ENCODE measurements at regions of chr5 and their contacts with region 1.

Region 1: GRCh38 chr5:130109152-130109551 is 204.9 kb downstream of the CHSY3 start:
- DNase-seq: peak; percentile 33
- H3K4me3 ChIP-seq: no peak overlapping the region
- H3K27ac ChIP-seq: no peak overlapping the region
- H3K4me1 ChIP-seq: no peaks in the 10 kb centered on the region
- H3K27me3 ChIP-seq: no peaks in the 10 kb centered on the region
- CTCF ChIP-seq: peak; percentile 27 to 47
- POLR2A ChIP-seq: no peak

Region 2: GRCh38 chr5:130141659-130142320 is 32.6 kb after region 1 on chr5:
- CTCF ChIA-PET with region 1: interaction called, 13 read pairs
- POLR2A ChIA-PET with region 1: no interaction called
- dilution Hi-C with region 1: no loop called
- intact Hi-C with region 1: loop called (anchors 1 kb)
- DNase-seq: peak; percentile 57
- H3K4me3 ChIP-seq: no peak overlapping the region
- H3K27ac ChIP-seq: no peak overlapping the region
- H3K4me1 ChIP-seq: no peaks in the 10 kb centered on the region
- H3K27me3 ChIP-seq: no peaks in the 10 kb centered on the region
- CTCF ChIP-seq: peak; percentile 57 to 75
- POLR2A ChIP-seq: no peak

Region 3: DNA sequence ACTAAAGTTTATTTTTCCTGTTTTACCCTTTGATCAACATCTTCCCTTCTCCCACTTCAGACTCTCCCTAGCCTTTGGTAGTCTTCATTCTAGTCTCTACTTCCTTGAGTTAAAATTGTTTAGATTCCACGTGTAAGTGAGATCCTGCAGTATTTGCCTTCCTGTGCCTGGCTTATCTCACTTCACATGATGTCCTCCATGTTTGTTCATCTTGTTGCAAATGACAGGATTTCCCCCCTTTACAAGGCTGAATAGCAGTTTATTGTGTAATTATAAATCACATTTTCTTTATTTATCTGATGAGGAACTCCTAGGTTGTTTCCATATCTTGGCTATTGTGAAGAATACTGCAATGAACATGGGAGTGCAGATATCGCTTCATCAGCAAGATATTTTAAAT is 256.8 kb after region 1 on chr5:
- CTCF ChIA-PET with region 1: no interaction called
- POLR2A ChIA-PET with region 1: no interaction called
- dilution Hi-C with region 1: no loop called
- intact Hi-C with region 1: loop called (anchors 10 kb)
- DNase-seq: peak; percentile 84
- H3K4me3 ChIP-seq: no peak overlapping the region
- H3K27ac ChIP-seq: no peak overlapping the region
- H3K4me1 ChIP-seq: no peaks in the 10 kb centered on the region
- H3K27me3 ChIP-seq: no peaks in the 10 kb centered on the region
- CTCF ChIP-seq: no peak
- POLR2A ChIP-seq: no peak

Region 4: DNA sequence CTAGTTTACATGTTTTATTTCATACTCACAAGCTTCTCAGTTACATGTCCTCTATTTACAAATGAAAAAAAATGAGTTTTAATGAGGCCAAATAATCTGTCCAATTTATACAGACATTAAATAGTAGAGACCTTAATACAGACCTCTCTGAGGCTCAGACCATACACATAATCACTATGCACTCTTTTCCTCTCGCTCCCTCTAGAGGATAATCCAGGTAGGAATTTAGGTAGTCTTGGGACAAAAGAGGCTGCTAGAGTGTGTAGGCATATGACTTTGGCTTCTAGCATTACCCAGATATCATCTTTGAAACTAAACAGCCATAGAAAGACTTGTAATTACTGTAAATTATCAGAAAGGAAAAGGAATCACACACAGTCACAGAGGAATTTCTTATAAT is 611.2 kb after region 1 on chr5:
- CTCF ChIA-PET with region 1: interaction called, 5 read pairs
- POLR2A ChIA-PET with region 1: no interaction called
- dilution Hi-C with region 1: no loop called
- intact Hi-C with region 1: loop called (anchors 1 kb)
- DNase-seq: peak; percentile 67
- H3K4me3 ChIP-seq: no peak overlapping the region
- H3K27ac ChIP-seq: no peak overlapping the region
- H3K4me1 ChIP-seq: no peaks in the 10 kb centered on the region
- H3K27me3 ChIP-seq: peaks cover 0 to 1% of the 10 kb centered on the region in 2 experiments
- CTCF ChIP-seq: peak; percentile 9 to 54
- POLR2A ChIP-seq: no peak

Region 5: DNA sequence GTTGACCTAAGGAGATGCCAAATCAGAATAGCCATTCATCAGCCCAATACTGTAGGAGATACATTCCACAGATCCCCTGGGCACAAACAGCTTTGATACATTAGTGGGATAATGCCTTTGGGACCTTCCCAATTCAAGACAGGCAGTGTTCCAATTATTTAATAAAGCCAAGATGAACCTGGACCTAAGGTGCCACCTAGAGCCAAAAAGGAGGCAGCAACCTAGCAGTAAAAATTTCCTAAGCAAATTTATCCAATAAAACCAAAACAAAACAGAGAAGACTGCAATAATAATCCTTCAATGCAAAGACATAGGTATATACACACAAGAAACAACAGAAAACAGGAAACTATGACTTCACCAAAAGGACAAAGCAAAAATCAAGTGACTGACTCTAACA is 802.9 kb after region 1 on chr5:
- CTCF ChIA-PET with region 1: no interaction called
- POLR2A ChIA-PET with region 1: no interaction called
- dilution Hi-C with region 1: no loop called
- intact Hi-C with region 1: loop called (anchors 5 kb)
- DNase-seq: no peak
- H3K4me3 ChIP-seq: no peak overlapping the region
- H3K27ac ChIP-seq: no peak overlapping the region
- H3K4me1 ChIP-seq: no peaks in the 10 kb centered on the region
- H3K27me3 ChIP-seq: no peaks in the 10 kb centered on the region
- CTCF ChIP-seq: no peak
- POLR2A ChIP-seq: no peak

Region 6: DNA sequence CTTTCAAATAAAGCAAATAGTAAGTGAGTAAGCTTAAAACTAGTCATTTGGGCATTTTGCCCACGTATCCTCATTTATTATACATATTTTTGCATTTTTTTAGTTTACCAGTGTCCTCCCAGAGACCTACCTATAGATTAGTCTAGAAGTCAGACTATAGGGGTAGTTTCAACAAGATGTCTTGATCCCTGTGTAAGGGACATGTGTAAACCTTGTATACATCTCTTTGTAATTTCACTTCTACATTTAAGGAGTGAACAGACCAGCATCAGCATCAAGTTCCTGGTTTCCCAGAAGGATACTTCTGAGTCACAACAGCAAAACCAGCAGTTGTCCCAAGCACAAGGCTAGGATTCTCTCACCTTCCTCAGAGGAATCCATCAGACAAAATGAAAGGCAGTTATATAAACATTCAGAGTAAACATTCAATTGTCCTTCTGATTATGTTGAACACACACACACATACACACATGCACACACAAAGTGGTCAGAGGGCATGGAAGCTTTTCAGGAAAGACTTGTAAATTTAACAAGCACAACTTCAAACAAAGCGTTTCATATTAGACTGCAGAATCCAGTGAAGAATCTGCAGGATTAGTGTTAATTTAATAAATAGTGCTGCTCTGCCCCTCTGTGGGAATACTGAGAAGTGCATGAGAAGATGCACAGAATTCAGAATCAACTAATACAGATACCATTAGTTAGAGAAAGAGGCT is 1000.5 kb after region 1 on chr5:
- CTCF ChIA-PET with region 1: no interaction called
- POLR2A ChIA-PET with region 1: no interaction called
- dilution Hi-C with region 1: no loop called
- intact Hi-C with region 1: loop called (anchors 1 kb)
- DNase-seq: peak; percentile 52
- H3K4me3 ChIP-seq: no peak overlapping the region
- H3K27ac ChIP-seq: no peak overlapping the region
- H3K4me1 ChIP-seq: no peaks in the 10 kb centered on the region
- H3K27me3 ChIP-seq: peaks cover 0 to 2% of the 10 kb centered on the region in 2 experiments
- CTCF ChIP-seq: peak; percentile 40 to 57
- POLR2A ChIP-seq: no peak

Region 7: GRCh38 chr5:131417240-131417869 is 1308.2 kb after region 1 on chr5:
- CTCF ChIA-PET with region 1: no interaction called
- POLR2A ChIA-PET with region 1: no interaction called
- dilution Hi-C with region 1: no loop called
- intact Hi-C with region 1: loop called (anchors 5 kb)
- DNase-seq: peak; percentile 79
- H3K4me3 ChIP-seq: no peak overlapping the region
- H3K27ac ChIP-seq: no peak overlapping the region
- H3K4me1 ChIP-seq: no peaks in the 10 kb centered on the region
- H3K27me3 ChIP-seq: no peaks in the 10 kb centered on the region
- CTCF ChIP-seq: peak; percentile 60 to 64
- POLR2A ChIP-seq: no peak

Measured in endothelial cell of umbilical vein (primary cell).